Calu3 (cell line): ENCODE measurements at regions of chr3 and their contacts with region 1.

Region 1: DNA sequence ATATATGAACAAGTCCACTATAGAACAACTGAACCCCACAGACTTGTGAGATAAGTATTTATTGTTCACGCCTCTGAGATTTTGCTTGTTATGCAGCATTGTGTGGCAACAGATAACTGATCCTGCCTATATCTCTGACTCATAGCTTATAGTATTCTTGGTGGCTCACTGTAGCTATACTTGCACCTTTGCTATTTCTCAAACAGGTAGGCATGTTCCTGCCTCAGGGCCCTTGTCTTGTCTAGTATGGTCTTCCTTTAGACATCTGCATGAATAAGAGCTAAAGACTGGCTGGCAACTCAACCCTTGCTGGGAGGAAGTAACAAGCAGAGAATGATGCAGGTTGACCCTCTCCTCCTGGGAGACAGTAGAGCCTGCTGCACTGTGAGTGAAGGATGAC is 256.1 kb downstream of the CHST2 start:
- DNase-seq: no peak
- H3K4me3 Mint-ChIP-seq: no peak overlapping the region
- H3K27ac Mint-ChIP-seq: no peak overlapping the region
- H3K4me1 Mint-ChIP-seq: no peaks in the 10 kb centered on the region
- H3K27me3 Mint-ChIP-seq: no peaks in the 10 kb centered on the region
- CTCF ChIP-seq: no peak

Region 2: GRCh38 chr3:143056372-143056771 is 319.3 kb before region 1 on chr3:
- CTCF ChIA-PET with region 1: interaction called, 10 read pairs
- intact Hi-C with region 1: no loop called
- DNase-seq: no peak
- H3K4me3 Mint-ChIP-seq: no peak overlapping the region
- H3K27ac Mint-ChIP-seq: no peak overlapping the region
- H3K4me1 Mint-ChIP-seq: no peaks in the 10 kb centered on the region
- H3K27me3 Mint-ChIP-seq: no peaks in the 10 kb centered on the region
- CTCF ChIP-seq: no peak

Region 3: DNA sequence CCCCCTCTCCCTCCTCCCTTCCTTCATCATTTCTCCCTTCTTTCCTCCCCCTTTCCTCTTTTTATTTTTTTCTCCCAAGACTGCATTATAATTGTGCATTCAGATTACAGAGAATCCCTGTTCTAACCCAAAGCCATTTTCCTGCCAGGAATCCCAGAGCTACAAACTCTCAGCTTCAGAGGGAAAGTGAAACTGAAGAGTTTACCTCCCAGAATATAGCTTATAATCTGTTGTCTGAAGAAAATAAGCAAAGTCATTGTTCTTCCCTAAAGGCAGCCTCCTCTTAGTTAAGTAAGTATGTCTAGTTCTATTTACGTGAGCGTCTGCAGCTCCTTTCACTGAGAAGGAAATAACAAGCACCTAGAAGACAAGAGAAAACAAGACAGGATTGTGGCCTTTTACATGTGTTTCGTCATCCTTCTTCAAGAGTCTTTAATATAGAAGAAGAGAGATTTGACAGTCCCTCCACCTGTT is 159.0 kb before region 1 on chr3:
- CTCF ChIA-PET with region 1: no interaction called
- intact Hi-C with region 1: no loop called
- DNase-seq: no peak
- H3K4me3 Mint-ChIP-seq: no peak overlapping the region
- H3K27ac Mint-ChIP-seq: no peak overlapping the region
- H3K4me1 Mint-ChIP-seq: no peaks in the 10 kb centered on the region
- H3K27me3 Mint-ChIP-seq: peaks cover 19% of the 10 kb centered on the region
- CTCF ChIP-seq: no peak

Region 4: GRCh38 chr3:143307613-143308183 is 68.0 kb before region 1 on chr3:
- CTCF ChIA-PET with region 1: no interaction called
- intact Hi-C with region 1: no loop called
- DNase-seq: no peak
- H3K4me3 Mint-ChIP-seq: no peak overlapping the region
- H3K27ac Mint-ChIP-seq: no peak overlapping the region
- H3K4me1 Mint-ChIP-seq: peaks cover 22% of the 10 kb centered on the region
- H3K27me3 Mint-ChIP-seq: peaks cover 13% of the 10 kb centered on the region
- CTCF ChIP-seq: no peak

Region 5: GRCh38 chr3:143433787-143434378 is 58.2 kb after region 1 on chr3:
- CTCF ChIA-PET with region 1: no interaction called
- intact Hi-C with region 1: no loop called
- DNase-seq: peak; percentile 45
- H3K4me3 Mint-ChIP-seq: no peak overlapping the region
- H3K27ac Mint-ChIP-seq: no peak overlapping the region
- H3K4me1 Mint-ChIP-seq: peaks cover 23% of the 10 kb centered on the region
- H3K27me3 Mint-ChIP-seq: no peaks in the 10 kb centered on the region
- CTCF ChIP-seq: peak; percentile 45